Posterior vena cava (tissue), 2 donors: ENCODE measurements at regions of chr6 and their contacts with region 1.

Region 1: GRCh38 chr6:85383042-85383441 is 66.8 kb upstream of the NT5E start:
- DNase-seq: no peak

Region 2: GRCh38 chr6:85044361-85044760 is 338.7 kb before region 1 on chr6:
- intact Hi-C with region 1: no loop called
- DNase-seq: no peak

Region 3: DNA sequence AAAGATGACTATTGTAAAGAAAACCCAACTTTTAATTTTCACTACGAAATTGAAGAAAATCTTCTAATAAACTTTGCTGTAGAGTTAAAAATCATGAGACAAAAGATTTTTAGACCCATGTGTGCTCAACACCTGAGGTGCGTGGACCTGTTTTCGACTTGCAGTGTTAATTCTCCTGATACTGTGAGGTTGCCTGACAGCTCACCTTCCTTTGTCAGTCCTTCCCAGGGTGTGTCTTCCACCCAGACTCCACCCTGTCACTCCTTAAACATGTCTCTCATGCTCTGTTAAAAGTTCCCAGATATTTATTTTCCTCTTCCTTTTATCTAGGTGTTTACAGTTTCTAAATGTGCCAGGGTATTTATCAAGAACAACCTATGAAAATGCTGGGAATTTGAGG is 84.5 kb before region 1 on chr6:
- intact Hi-C with region 1: no loop called
- DNase-seq: no peak

Region 4: DNA sequence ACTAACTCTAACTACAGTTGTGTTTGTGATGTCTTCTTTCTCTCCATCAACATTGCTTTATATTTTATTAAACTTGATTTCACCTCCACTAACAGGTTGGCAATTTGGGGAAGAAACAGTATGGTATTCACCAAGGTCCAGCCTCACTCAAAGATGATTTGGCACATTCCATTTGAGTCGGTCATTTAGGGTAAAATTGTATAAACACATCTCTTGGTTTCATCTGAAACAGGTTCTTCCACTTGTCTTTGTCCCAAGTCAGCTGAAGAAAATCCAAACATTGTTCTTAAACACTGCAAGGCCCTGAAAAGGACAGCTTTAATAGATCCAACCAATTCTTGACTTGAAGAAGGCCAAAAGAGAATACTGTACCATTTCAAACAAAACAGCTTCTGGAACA is 38.0 kb before region 1 on chr6:
- intact Hi-C with region 1: no loop called
- DNase-seq: no peak

Region 5: GRCh38 chr6:85452441-85452881 is 69.4 kb after region 1 on chr6:
- intact Hi-C with region 1: loop called in 1 of 2 experiments (anchors 2 kb)
- DNase-seq: no peak